ENCODE measurements at regions of chr17 and their contacts with region 1.

Region 1: DNA sequence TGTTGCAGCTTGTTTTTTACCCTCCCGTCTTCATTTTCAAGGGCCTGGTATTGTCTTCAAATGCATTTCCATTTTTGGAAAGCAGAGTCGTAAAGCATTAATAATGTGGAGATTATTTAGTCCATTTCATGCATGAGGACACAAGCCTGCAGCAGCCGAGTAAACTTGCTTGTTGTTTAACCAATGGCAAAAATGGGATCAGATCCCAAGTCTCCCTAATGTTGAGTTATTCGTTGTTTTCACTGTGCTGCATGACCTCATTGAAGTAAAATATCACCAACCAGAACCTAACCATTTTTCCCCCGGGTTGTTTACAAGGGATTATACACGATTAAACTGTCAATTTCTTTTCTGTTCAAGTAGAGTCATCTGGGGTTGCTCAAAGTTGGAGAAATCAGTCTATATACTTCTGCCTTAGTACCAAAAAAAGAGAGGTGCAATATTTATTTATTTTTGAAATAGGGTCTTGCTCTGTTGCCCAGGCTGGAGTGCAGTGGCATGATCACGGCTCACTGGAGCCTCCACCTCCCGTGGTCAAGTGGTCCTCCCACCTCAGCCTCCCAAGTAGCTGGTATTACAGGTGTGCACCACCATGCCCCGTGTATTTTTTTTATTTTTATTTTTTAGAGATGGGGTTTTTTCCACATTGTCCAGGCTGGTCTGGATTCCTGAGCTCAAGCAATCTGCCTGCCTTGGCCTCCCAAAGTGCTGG is 12.4 kb downstream of the AMZ2 start:
- DNase-seq: no peak
- H3K4me3 ChIP-seq: no peak overlapping the region
- H3K27ac ChIP-seq: no peak overlapping the region
- H3K4me1 ChIP-seq: no peaks in the 10 kb centered on the region
- H3K27me3 ChIP-seq: no peaks in the 10 kb centered on the region
- CTCF ChIP-seq: no peak

Region 2: GRCh38 chr17:68435876-68436842 is 176.0 kb after region 1 on chr17:
- intact Hi-C with region 1: loop called (anchors 10 kb)
- DNase-seq: peak; percentile 84
- H3K4me3 ChIP-seq: no peak overlapping the region
- H3K27ac ChIP-seq: no peak overlapping the region
- H3K4me1 ChIP-seq: peaks cover 11% of the 10 kb centered on the region
- H3K27me3 ChIP-seq: no peaks in the 10 kb centered on the region
- CTCF ChIP-seq: peak; percentile 95

Measured in colonic mucosa (tissue), 4 donors.